ENCODE measurements at regions of chr17 and their contacts with region 1.

Region 1: GRCh38 chr17:48625495-48626244 is 488 bp downstream of the HOXB9 start:
- DNase-seq: peak; percentile 54
- H3K4me3 ChIP-seq: peak overlapping the region; percentile 60
- H3K27ac ChIP-seq: peak overlapping the region; percentile 64
- H3K4me1 ChIP-seq: peaks cover 20% of the 10 kb centered on the region
- H3K27me3 ChIP-seq: no peaks in the 10 kb centered on the region
- CTCF ChIP-seq: no peak

Region 2: DNA sequence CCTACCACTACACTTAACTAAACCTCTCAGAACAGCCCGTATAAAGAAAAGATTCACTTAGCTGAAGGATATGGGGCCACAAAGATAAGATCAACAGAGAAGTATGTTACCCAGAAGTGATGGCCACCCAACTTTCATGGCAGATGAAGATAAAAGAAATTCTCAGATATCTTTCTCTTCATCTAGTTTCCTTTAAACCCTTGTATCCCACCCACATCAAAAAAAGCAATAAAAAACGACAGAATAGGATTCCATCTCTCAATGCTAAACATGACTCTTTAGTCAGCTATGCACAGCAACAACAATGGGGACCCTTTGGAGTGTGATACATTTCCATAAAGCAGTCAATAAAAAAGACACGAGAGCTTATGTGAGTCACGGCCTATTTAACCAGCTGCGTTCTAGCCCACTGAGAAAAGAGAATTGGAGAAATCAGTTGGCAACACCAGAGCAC is 431.5 kb before region 1 on chr17:
- CTCF ChIA-PET with region 1: no interaction called
- POLR2A ChIA-PET with region 1: interaction called, 13 read pairs
- intact Hi-C with region 1: no loop called
- DNase-seq: peak; percentile 90
- H3K4me3 ChIP-seq: no peak overlapping the region
- H3K27ac ChIP-seq: no peak overlapping the region
- H3K4me1 ChIP-seq: peaks cover 48% of the 10 kb centered on the region
- H3K27me3 ChIP-seq: no peaks in the 10 kb centered on the region
- CTCF ChIP-seq: no peak

Region 3: GRCh38 chr17:48483471-48484131 is 142.1 kb before region 1 on chr17:
- CTCF ChIA-PET with region 1: no interaction called
- POLR2A ChIA-PET with region 1: no interaction called
- intact Hi-C with region 1: no loop called
- DNase-seq: peak; percentile 57
- H3K4me3 ChIP-seq: no peak overlapping the region
- H3K27ac ChIP-seq: no peak overlapping the region
- H3K4me1 ChIP-seq: no peaks in the 10 kb centered on the region
- H3K27me3 ChIP-seq: no peaks in the 10 kb centered on the region
- CTCF ChIP-seq: no peak

Region 4: DNA sequence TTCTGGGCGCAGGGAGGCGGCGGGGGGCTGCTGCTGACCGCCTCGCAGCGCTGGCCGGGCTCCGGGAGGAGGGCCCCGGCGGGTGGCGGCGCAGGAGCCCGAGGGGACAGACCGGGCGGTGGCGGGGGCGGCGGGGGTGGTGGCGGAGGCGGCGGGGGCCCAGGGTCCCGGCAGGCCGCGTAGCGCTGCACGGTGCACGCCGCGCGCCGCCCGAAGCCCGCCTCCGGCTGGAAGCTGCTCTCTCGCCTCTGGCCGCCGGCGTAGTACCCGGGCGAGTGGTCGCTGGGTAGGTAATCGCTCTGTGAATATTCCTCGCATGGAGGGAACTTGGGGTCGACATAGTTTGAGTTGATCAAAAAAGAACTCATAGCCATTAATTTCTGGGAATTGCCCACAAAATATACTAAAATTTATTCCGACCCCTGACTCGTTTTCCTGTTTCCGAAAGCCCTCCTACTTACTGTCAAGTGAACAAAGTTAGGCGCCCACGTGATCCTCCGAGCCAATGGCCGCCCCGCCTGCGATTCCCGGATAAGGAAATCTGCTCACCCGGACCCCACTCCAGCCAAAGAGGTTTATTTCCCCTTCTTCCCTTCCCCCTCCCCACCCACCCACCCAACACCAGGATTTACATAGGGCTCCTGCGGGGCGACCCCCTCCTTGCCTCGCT is 47.6 kb before region 1 on chr17 and contains the start of gene HOXB4:
- CTCF ChIA-PET with region 1: no interaction called
- POLR2A ChIA-PET with region 1: no interaction called
- intact Hi-C with region 1: no loop called
- DNase-seq: peak; percentile 89
- H3K4me3 ChIP-seq: peak within 1 kb of the TSS; percentile 57
- H3K27ac ChIP-seq: peak within 1 kb of the TSS; percentile 79
- H3K4me1 ChIP-seq: peaks cover 40% of the 10 kb centered on the region
- H3K27me3 ChIP-seq: no peaks in the 10 kb centered on the region
- CTCF ChIP-seq: no peak
- total RNA-seq, gene HOXB4: 9.7 and 11.9 TPM in 2 replicates

Region 5: DNA sequence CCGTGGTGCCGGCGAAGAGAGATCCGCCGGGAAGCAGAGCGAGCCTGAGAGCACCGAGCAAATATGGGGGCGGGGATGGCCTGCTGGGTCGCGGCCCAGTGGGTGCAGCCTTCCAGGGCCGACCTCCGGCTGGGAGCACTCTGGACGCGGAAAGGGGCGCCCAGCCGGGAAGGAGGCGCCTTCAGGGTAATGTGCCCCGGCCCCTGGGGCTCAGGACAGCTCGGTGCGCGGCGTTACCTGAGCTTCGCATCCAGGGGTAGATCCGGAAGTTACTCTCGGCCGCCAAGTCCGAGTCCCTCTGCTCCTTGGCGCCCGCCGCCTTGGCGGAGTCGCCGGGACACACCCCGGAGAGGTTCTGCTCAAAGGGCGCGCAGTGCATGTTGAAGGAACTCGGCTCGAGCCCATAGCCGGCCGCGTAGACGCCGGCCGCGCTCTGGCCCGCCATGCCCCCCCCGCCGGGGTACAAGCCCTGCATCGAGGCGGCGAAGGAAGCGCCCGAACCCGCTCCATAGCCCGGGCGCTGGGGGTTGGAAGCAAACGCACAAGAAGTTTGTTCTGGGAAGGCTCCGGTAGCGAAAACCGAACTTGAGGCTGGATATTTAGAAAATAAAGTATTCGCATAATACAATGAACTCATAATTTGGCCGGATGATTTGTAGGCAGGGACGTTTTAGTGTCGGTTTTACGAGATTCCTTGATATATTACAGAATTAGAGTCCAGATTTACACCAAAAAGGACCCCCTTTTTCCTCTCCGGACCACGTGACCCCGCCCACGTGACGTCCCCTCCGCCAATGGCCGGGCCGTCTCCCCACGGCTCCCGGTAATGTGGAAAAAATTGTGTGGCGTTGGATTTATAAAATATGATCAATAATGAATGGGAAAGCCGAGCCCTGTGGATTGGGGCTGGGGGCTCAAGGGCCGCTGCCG is 15.1 kb before region 1 on chr17 and contains the start of gene HOXB7:
- CTCF ChIA-PET with region 1: interaction called, 4 read pairs
- POLR2A ChIA-PET with region 1: interaction called, 12 read pairs
- intact Hi-C with region 1: no loop called
- DNase-seq: peak; percentile 87
- H3K4me3 ChIP-seq: peak within 1 kb of the TSS; percentile 87
- H3K27ac ChIP-seq: peak within 1 kb of the TSS; percentile 96
- H3K4me1 ChIP-seq: peaks cover 30% of the 10 kb centered on the region
- H3K27me3 ChIP-seq: no peaks in the 10 kb centered on the region
- CTCF ChIP-seq: no peak
- total RNA-seq, gene HOXB7: 32.2 and 37.9 TPM in 2 replicates

Measured in A673 (cell line).